ENCODE measurements at regions of chr17 and their contacts with region 1.

Region 1: DNA sequence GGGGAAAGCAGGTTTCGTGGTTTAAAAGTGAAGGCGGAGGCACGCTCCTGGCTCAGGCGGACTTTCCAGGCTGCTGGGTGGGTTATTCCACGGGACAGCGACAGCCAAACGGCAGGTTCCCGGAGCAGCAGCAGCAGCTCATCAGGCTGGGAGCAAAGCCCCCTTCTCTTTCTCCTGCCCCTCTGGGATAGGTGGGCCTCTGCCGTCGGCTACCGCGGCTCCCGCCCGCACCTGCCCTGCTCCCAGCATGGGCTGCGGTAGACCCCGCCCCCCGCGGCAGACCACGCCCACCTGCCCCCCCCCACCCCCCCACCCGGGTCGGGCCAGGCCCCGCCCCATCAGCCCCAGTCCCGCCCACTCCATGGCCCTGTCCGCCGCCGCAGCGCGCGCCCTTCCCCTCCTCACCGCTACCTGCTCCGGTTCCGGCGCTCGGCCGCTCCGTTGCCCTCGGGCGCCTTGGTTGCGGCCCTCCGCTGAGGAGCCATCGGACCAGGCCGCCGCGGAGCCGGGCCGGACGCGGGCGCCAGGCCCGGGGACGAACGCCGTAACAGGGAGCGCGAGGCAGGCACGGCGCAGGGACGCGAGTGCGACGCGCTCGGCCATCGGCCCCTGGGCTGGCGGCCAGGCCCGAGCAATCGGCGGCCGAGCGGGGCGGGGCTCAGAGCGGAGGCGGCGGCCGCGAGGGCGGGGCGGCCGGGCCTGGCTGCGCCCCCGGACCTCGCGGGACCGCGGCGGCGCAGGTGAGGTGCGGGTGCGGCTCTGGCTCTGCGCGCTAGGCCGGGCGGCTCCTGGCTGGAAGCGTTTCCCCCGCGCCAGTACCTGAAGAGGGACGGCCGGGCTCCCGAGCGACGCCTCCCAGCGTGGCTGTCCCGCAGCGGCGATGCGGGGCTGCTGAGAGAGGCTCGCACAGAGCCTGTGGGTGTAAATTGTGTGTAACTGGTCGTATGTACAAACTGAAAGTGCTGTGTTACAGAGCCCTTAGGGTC is at the starts of genes HEXD and OGFOD3:
- DNase-seq: peak; percentile 80 to 91 (median 89)
- H3K4me3 ChIP-seq: peak within 1 kb of the TSS; percentile 82 to 96 (median 94)
- H3K27ac ChIP-seq: peak within 1 kb of the TSS; percentile 33 to 82
- H3K4me1 ChIP-seq: peaks cover 13 to 29% (median 18%) of the 10 kb centered on the region in 4 experiments
- H3K27me3 ChIP-seq: no peaks in the 10 kb centered on the region

Region 2: GRCh38 chr17:82351716-82352488 is 66.4 kb before region 1 on chr17:
- CTCF ChIA-PET with region 1: interaction called, 22 read pairs
- POLR2A ChIA-PET with region 1: no interaction called
- DNase-seq: peak; percentile 89 to 96 (median 92)
- H3K4me3 ChIP-seq: no peak overlapping the region
- H3K27ac ChIP-seq: no peak overlapping the region
- H3K4me1 ChIP-seq: peaks cover 0 to 17% (median 7%) of the 10 kb centered on the region in 4 experiments
- H3K27me3 ChIP-seq: peaks cover 0 to 5% (median 0%) of the 10 kb centered on the region in 5 experiments